HepG2 (cell line): ENCODE measurements at regions of chr14 and their contacts with region 1.

Region 1: DNA sequence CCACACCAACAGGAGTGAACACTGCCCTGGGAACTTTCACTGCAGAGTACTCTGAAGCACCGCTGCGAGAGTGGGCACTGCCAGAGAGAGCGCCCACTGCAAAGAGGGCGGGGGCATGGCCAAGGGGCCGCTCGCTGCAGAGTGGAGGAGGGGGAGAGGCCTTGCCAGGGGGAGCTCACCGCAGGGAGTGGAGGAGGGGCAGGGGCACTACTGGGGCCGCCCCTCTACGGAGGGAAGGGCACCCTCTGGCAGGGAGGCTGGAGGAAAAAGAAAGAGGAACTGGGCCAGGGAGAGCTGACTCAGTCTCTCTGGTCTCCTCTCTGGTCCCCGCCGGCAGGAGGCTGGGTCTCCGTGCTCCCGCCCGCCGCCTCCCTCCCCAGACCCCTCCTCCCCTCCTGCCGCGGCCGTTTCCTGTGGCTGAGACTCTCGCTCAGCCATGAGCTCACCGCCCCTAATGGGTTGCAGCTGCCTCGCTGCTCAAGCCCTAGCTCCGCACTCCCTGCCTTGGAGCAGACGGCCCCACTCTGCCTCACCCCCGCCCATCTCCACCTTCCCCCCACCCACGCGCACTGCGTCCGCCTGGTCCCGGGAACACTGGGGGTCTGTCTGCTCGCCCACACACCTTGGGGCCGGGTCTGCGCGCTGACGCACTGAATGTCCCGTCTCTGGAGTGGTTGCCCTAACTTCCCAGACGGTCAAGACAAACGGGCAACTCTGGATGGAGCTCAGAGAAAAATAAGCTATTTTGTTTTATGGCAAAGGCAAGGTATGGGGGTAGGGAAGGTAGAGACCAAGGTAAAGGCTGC is 1.3 kb downstream of the ARHGEF40 start:
- DNase-seq: peak; percentile 56
- ATAC-seq: peak; percentile 23
- H3K4me3 ChIP-seq: peak overlapping the region; percentile 86 to 90 (median 87)
- H3K27ac ChIP-seq: peak overlapping the region; percentile 77
- H3K4me1 ChIP-seq: peaks cover 53% of the 10 kb centered on the region
- H3K27me3 ChIP-seq: peaks cover 0 to 7% of the 10 kb centered on the region in 2 experiments; a peak in 1 of 5 replicates
- CTCF ChIP-seq: peak; percentile 11
- EP300 ChIP-seq: no peak; a peak in 1 of 4 replicates
- POLR2A ChIP-seq: no peak
- RAD21 ChIP-seq: no peak

Region 2: DNA sequence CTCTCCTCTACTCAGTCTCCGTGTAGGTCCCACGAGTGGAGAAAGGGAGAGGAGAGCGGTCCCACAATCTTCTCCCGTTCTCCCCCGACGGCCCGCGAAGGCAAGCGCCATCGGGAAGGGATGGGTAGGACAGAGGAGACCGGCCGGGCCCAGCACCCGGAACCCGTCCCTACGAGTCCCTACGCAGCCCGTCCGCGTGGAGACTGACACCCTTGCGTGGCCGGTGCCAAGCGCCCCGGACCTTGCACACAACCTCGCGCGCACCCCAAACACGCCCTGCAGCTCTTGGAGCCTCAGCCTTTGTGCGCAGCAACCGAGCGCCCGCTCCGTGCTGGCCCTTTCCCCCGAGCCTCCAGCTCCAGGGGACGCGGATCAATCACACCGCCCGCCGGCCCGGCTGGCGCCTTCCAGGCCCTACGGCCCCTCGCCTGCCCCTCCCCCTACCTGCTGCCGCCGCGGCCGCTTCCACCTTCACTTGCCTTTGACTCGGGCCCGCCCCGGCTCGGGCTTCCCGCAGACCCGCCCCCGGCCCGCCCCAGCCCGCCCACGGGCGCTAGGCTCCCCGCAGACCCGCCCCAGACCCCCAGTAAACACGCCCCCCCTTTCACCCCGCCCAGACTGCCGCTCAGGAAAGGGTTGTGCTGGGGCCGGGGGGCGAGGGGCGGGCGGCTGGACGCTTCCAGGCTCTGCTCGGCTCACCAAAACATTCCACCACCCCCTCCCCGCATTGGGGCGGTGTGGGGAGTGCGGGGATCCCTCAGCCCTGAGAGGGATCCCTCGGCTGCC is 46.6 kb before region 1 on chr14 and contains the start of gene NDRG2:
- CTCF ChIA-PET with region 1: no interaction called
- POLR2A ChIA-PET with region 1: interaction called, 15 read pairs
- in situ Hi-C with region 1: no loop called
- intact Hi-C with region 1: no loop called
- DNase-seq: peak; percentile 84
- ATAC-seq: peak; percentile 90
- H3K4me3 ChIP-seq: peak within 1 kb of the TSS; percentile 65 to 96 (median 94)
- H3K27ac ChIP-seq: peak within 1 kb of the TSS; percentile 83
- H3K4me1 ChIP-seq: peaks cover 50% of the 10 kb centered on the region
- H3K27me3 ChIP-seq: no peaks in the 10 kb centered on the region; a peak in 1 of 5 replicates
- CTCF ChIP-seq: peak; percentile 7; the same call in 1 of the 2 replicates
- EP300 ChIP-seq: peak; percentile 41 to 77; a peak in 3 of 4 replicates
- POLR2A ChIP-seq: peak; percentile 78 to 80
- RAD21 ChIP-seq: peak; percentile 58
- total RNA-seq, gene NDRG2: 27.2 and 27.4 TPM in 2 replicates

Region 3: GRCh38 chr14:21049271-21049673 is 22.2 kb before region 1 on chr14:
- CTCF ChIA-PET with region 1: no interaction called
- POLR2A ChIA-PET with region 1: interaction called, 46 read pairs
- in situ Hi-C with region 1: no loop called
- intact Hi-C with region 1: loop called (anchors 2 kb)
- DNase-seq: no peak
- ATAC-seq: no peak
- H3K4me3 ChIP-seq: no peak overlapping the region
- H3K27ac ChIP-seq: peak overlapping the region; percentile 33
- H3K4me1 ChIP-seq: peaks cover 83% of the 10 kb centered on the region
- H3K27me3 ChIP-seq: no peaks in the 10 kb centered on the region
- CTCF ChIP-seq: no peak
- EP300 ChIP-seq: no peak
- POLR2A ChIP-seq: no peak
- RAD21 ChIP-seq: no peak

Region 4: GRCh38 chr14:21084988-21085853 is 13.8 kb after region 1 on chr14:
- CTCF ChIA-PET with region 1: interaction called, 38 read pairs
- POLR2A ChIA-PET with region 1: interaction called, 52 read pairs
- in situ Hi-C with region 1: no loop called
- intact Hi-C with region 1: no loop called
- DNase-seq: no peak
- ATAC-seq: peak; percentile 17; the same call in 2 of the 3 replicates
- H3K4me3 ChIP-seq: no peak overlapping the region
- H3K27ac ChIP-seq: no peak overlapping the region
- H3K4me1 ChIP-seq: peaks cover 22% of the 10 kb centered on the region
- H3K27me3 ChIP-seq: no peaks in the 10 kb centered on the region
- CTCF ChIP-seq: 0 out of 2 replicates have a peak, but pooled peaks have one; percentile 4
- EP300 ChIP-seq: no peak
- POLR2A ChIP-seq: no peak
- RAD21 ChIP-seq: no peak

Region 5: GRCh38 chr14:21098076-21098891 is 26.9 kb after region 1 on chr14 and contains the start of gene ZNF219:
- CTCF ChIA-PET with region 1: interaction called, 135 read pairs
- POLR2A ChIA-PET with region 1: interaction called, 141 read pairs
- in situ Hi-C with region 1: loop called (anchors 5 kb)
- intact Hi-C with region 1: no loop called
- DNase-seq: peak; percentile 74
- ATAC-seq: peak; percentile 57
- H3K4me3 ChIP-seq: peak within 1 kb of the TSS; percentile 67 to 85 (median 83)
- H3K27ac ChIP-seq: peak within 1 kb of the TSS; percentile 70
- H3K4me1 ChIP-seq: peaks cover 82% of the 10 kb centered on the region
- H3K27me3 ChIP-seq: no peaks in the 10 kb centered on the region; a peak in 1 of 5 replicates
- CTCF ChIP-seq: no peak; the same call in 1 of the 2 replicates
- EP300 ChIP-seq: no peak; a peak in 1 of 4 replicates
- POLR2A ChIP-seq: peak in 1 of 2 experiments; percentile 39; a peak in 1 of 4 replicates
- RAD21 ChIP-seq: no peak
- total RNA-seq, gene ZNF219: 21.0 and 36.6 TPM in 2 replicates

Region 6: DNA sequence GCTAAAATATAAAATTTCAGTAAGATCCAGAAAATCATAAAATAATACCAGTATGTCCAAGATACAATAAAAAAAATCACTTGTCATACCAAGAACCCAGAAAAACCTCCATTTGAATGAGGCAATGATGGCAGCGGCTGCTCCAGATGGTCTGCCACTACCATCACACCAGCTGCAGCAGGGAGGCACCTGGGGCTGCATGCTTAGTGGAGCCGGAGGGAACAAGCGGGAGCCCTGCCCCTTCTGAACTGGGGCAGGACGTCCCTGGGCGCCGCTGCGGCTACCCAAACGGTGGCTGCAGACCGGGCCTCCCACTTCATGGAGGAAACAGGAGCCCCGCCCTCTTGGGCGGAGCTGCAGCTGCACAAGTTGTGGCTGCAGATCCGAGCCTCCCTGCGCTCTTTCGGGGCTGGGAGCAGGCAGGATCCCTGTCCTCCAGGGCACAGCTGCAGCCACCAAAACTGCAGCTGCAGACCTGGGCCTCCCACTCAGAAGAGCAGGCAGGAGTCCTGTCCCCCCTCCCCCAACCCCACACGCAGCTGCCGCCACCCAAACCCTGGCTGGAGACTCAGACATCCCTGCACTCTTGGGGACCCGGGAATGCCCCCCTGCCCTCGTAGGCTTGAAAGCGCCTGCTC is 120.5 kb after region 1 on chr14:
- CTCF ChIA-PET with region 1: no interaction called
- POLR2A ChIA-PET with region 1: no interaction called
- in situ Hi-C with region 1: no loop called
- intact Hi-C with region 1: loop called (anchors 5 kb)
- DNase-seq: peak; percentile 77
- ATAC-seq: peak; percentile 90
- H3K4me3 ChIP-seq: peak overlapping the region; percentile 53 to 78 (median 58)
- H3K27ac ChIP-seq: no peak overlapping the region
- H3K4me1 ChIP-seq: peaks cover 22% of the 10 kb centered on the region
- H3K27me3 ChIP-seq: no peaks in the 10 kb centered on the region; a peak in 1 of 5 replicates
- CTCF ChIP-seq: no peak
- EP300 ChIP-seq: no peak
- POLR2A ChIP-seq: 0 out of 4 replicates have a peak, but pooled peaks of 1 of the 2 experiments have one; percentile 30
- RAD21 ChIP-seq: no peak

Region 7: GRCh38 chr14:21768116-21768874 is 696.9 kb after region 1 on chr14:
- CTCF ChIA-PET with region 1: no interaction called
- POLR2A ChIA-PET with region 1: no interaction called
- in situ Hi-C with region 1: no loop called
- intact Hi-C with region 1: no loop called
- DNase-seq: peak; percentile 42
- ATAC-seq: peak; percentile 96
- H3K4me3 ChIP-seq: no peak overlapping the region
- H3K27ac ChIP-seq: no peak overlapping the region
- H3K4me1 ChIP-seq: 0 out of 2 replicates have a peak, but pooled peaks cover 4% of the 10 kb centered on the region
- H3K27me3 ChIP-seq: no peaks in the 10 kb centered on the region
- CTCF ChIP-seq: peak; percentile 66
- EP300 ChIP-seq: no peak
- POLR2A ChIP-seq: no peak
- RAD21 ChIP-seq: no peak